ENCODE measurements at regions of chr9 and their contacts with region 1.

Region 1: DNA sequence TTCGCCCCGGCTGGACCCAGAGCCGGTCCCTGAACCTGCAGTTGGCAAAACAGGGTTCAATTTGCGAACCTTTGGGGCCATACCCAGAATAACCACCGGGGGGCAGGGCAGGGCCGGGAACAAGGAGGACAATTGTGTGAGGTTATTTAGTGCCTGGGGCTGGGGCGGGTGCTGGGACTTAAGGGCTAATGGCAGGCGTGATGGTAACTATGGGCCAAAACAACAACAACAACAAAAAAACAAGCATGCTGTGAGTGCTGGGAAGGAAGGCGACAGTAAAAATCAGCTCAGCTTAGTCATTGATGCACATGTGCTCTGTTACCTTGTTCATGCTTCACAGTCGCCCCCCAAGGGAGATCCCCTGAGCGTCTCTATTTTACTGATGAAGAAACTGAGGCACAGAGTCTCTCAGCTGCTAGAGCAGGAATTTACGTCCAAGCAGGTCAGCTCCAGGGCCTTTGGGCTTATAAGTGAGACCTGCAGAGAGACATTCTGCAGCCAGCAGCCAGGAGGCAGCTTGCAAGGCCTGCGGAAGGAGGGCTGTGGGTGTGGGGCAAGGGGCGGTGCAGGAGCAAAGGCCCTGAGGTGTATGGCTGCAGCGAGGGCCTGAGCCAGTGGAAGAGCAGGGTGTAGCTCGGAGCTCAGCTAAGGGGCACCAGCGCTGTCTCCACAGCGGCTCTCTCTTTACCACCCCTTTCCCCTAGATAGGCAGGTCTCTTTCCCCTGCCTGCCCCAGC is 106.0 kb downstream of the PHF2 start:
- DNase-seq: peak; percentile 94
- ATAC-seq: peak; percentile 76
- H3K4me3 Mint-ChIP-seq: no peak overlapping the region
- H3K27ac Mint-ChIP-seq: 0 out of 2 replicates have a peak overlapping the region, but pooled peaks have one; percentile 21
- H3K4me1 Mint-ChIP-seq: peaks cover 3% of the 10 kb centered on the region
- H3K27me3 Mint-ChIP-seq: no peaks in the 10 kb centered on the region
- CTCF ChIP-seq: peak; percentile 89

Region 2: DNA sequence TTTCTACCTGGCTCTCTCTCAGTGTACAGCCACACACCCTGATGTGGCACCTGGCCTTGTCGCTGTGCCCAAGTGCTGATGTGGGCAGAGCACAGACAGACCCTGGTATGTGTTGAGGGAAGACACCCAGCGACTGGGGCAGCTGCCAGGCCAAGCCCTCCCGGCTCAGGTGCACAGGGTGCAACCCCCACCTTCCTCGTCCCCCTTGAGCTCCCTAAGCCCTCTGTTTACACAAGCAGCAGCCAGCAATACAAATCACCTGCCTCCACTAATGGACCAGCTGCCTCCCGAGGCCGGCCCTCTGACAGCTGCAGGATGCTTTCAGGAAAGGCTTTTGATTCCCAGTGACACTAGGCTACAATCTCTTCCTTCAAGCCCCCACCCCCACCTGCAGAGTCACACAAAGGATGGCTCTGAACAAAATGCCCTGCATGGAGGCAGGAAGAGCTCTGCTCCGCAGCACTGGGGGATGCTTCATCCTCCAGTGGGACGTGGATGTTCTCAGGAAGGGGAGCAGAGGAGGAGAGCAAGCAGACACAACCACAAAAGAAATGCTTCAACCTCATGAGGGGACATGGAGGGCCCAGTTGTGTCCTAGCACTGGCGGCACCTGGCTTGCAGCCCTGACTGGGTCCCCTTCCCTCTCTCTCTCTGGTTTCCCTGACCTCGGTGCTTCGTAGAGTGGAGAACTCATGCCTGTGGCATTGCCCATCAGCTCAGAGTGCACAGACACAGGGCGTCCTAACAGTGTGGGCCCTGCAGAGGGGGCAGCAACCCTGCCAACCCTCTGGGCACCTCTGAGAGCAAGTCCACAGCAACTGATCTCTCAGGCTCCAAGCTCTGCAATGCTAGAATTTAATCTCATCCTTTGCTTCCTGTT is 131.9 kb after region 1 on chr9:
- CTCF ChIA-PET with region 1: interaction called, 18 read pairs
- POLR2A ChIA-PET with region 1: no interaction called
- DNase-seq: no peak
- ATAC-seq: peak; percentile 59
- H3K4me3 Mint-ChIP-seq: no peak overlapping the region
- H3K27ac Mint-ChIP-seq: no peak overlapping the region
- H3K4me1 Mint-ChIP-seq: peaks cover 37% of the 10 kb centered on the region
- H3K27me3 Mint-ChIP-seq: no peaks in the 10 kb centered on the region
- CTCF ChIP-seq: no peak

Region 3: DNA sequence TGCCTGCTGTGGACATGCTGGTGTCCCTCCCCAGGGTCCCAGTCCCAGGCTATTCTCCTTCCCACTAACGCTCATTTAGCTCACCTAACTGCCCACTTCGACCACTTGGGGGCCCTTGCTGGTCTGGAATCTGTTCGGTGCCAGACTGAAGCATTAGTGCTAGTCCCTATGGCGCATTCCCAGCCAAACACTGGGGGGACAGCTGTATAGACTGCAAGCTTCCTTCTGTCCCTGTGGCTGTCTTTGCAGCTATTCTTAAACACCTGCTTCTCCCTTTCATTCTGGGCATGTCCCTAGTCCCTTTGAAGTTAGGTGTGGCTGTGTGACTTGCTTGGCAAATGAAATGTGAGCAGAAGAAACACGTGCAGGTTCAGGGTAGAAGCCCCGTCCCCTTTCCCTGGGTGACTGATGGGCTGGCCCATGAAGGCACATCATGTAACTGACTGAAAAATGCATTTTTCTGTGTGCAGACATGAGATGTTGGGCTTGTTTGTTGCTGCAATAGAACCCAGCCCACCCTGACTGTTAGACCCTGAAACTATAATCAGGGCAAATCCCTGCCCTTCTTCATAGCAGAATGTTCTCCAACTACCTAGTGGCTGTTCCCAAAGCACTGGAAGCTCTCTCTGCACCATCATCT is 138.4 kb after region 1 on chr9:
- CTCF ChIA-PET with region 1: interaction called, 52 read pairs
- POLR2A ChIA-PET with region 1: no interaction called
- DNase-seq: peak; percentile 60
- ATAC-seq: peak; percentile 94
- H3K4me3 Mint-ChIP-seq: no peak overlapping the region
- H3K27ac Mint-ChIP-seq: no peak overlapping the region
- H3K4me1 Mint-ChIP-seq: peaks cover under 1% of the 10 kb centered on the region; the same call in 1 of the 2 replicates
- H3K27me3 Mint-ChIP-seq: peaks cover 7% of the 10 kb centered on the region
- CTCF ChIP-seq: no peak

Region 4: GRCh38 chr9:93945400-93946337 is 263.3 kb after region 1 on chr9:
- CTCF ChIA-PET with region 1: interaction called, 10 read pairs
- POLR2A ChIA-PET with region 1: no interaction called
- DNase-seq: no peak
- ATAC-seq: no peak; the same call in 1 of the 2 replicates
- H3K4me3 Mint-ChIP-seq: peak overlapping the region; percentile 69
- H3K27ac Mint-ChIP-seq: no peak overlapping the region
- H3K4me1 Mint-ChIP-seq: peaks cover 58% of the 10 kb centered on the region
- H3K27me3 Mint-ChIP-seq: peaks cover 99% of the 10 kb centered on the region
- CTCF ChIP-seq: no peak

Region 5: GRCh38 chr9:94002316-94003140 is 320.1 kb after region 1 on chr9:
- CTCF ChIA-PET with region 1: interaction called, 14 read pairs
- POLR2A ChIA-PET with region 1: no interaction called
- DNase-seq: peak; percentile 56
- ATAC-seq: peak; percentile 93
- H3K4me3 Mint-ChIP-seq: no peak overlapping the region
- H3K27ac Mint-ChIP-seq: no peak overlapping the region
- H3K4me1 Mint-ChIP-seq: 0 out of 2 replicates have a peak, but pooled peaks cover 2% of the 10 kb centered on the region
- H3K27me3 Mint-ChIP-seq: no peaks in the 10 kb centered on the region; the same call in 1 of the 2 replicates
- CTCF ChIP-seq: peak; percentile 66; the same call in 1 of the 2 replicates